ENCODE measurements at regions of chr2 and their contacts with region 1.

Region 1: DNA sequence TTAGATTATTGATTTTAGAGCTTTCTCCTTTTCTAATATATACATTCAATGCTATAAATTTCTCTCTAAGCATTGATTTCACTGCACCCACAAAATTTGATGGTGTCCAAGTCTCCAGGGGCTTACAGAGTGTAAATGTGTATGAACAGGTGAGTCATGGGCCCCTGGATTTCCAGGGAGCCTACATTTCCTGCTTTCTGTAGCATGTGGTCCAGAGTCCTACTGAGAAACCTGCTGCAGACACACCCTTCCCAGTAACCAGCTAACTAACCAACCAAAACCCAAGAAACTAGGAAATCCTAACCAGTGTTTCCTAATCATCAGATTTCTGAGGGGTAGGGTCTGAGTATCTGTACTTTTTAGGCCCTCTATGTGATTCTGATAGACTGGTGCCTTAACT is 39.5 kb upstream of the TANC1 start:
- DNase-seq: peak; percentile 44
- H3K4me3 Mint-ChIP-seq: no peak overlapping the region
- H3K27ac Mint-ChIP-seq: peak overlapping the region; percentile 66
- H3K4me1 Mint-ChIP-seq: peaks cover 70% of the 10 kb centered on the region
- H3K27me3 Mint-ChIP-seq: no peaks in the 10 kb centered on the region
- CTCF ChIP-seq: no peak

Region 2: GRCh38 chr2:158797963-158798700 is 130.8 kb before region 1 on chr2:
- CTCF ChIA-PET with region 1: no interaction called
- intact Hi-C with region 1: no loop called
- DNase-seq: no peak
- H3K4me3 Mint-ChIP-seq: no peak overlapping the region
- H3K27ac Mint-ChIP-seq: no peak overlapping the region
- H3K4me1 Mint-ChIP-seq: no peaks in the 10 kb centered on the region
- H3K27me3 Mint-ChIP-seq: peaks cover 31% of the 10 kb centered on the region
- CTCF ChIP-seq: no peak

Region 3: GRCh38 chr2:158948964-158949699 is 20.2 kb after region 1 on chr2:
- CTCF ChIA-PET with region 1: interaction called, 5 read pairs
- intact Hi-C with region 1: loop called (anchors 2 kb)
- DNase-seq: no peak
- H3K4me3 Mint-ChIP-seq: no peak overlapping the region
- H3K27ac Mint-ChIP-seq: peak overlapping the region; percentile 13
- H3K4me1 Mint-ChIP-seq: peaks cover 39% of the 10 kb centered on the region
- H3K27me3 Mint-ChIP-seq: no peaks in the 10 kb centered on the region
- CTCF ChIP-seq: no peak